Naive thymus-derived CD4-positive, alpha-beta T cell (primary cell): ENCODE measurements at regions of chr9 and their contacts with region 1.

Region 1: DNA sequence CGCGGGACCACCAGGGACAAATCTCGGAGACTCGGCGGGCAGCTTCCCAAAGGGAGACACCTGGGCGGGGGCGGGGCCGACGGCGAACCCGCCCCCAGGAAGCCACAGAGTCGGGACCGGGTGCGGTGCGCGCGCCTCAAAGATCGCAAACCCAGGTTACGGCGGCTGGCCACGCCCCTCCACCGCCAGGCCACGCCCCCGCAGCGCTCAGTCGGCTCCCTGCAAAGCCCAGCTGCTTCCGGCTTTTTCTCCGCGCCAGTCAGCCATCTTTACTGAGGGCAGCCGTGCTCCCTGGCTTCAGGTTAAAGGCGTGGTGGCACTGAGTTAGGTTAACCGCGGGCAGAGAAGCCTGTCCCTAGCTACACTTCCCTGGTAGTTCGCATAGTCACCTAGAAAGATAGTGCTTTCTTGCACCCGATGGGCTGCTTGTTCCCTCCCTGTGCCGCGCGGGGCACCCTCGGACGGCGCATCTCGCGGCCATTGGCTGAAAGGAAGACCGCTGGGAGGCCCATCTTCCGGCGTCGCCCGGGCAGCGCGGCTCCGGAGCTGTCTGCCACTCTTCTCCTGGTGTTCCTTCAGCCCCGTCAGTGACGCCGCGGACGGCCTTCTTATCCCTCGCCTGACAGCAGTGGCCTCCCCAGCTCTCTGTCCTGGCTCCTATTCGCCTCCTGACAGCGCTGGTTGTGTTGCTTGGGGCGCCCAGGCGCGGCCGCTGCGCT is at the start of gene TBC1D2:
- DNase-seq: peak; percentile 96 to 98 (median 98)
- ATAC-seq: peak; percentile 96
- H3K4me3 ChIP-seq: peak within 1 kb of the TSS; percentile 80
- H3K4me3 Mint-ChIP-seq: peak within 1 kb of the TSS; percentile 96 to 99 (median 97)
- H3K27ac ChIP-seq: peak within 1 kb of the TSS; percentile 78
- H3K27ac Mint-ChIP-seq: peak within 1 kb of the TSS; percentile 90 to 99 (median 97)
- H3K4me1 ChIP-seq: peaks cover 11 to 23% of the 10 kb centered on the region in 2 donors
- H3K4me1 Mint-ChIP-seq: peaks cover 24 to 45% (median 32%) of the 10 kb centered on the region in 7 donors
- H3K27me3 ChIP-seq: no peaks in the 10 kb centered on the region
- H3K27me3 Mint-ChIP-seq: peaks cover 0 to 13% (median 0%) of the 10 kb centered on the region in 5 donors
- total RNA-seq, gene TBC1D2: 4.9 to 16.6 (median 8.8) TPM

Region 2: GRCh38 chr9:97696803-97697601 is 558.7 kb before region 1 on chr9 and contains the start of gene XPA:
- CTCF ChIA-PET with region 1: no interaction called
- POLR2A ChIA-PET with region 1: interaction called, 3 read pairs
- intact Hi-C with region 1: loop called (anchors 1 to 5 kb)
- DNase-seq: peak; percentile 95 to 98 (median 96)
- ATAC-seq: peak; percentile 97
- H3K4me3 ChIP-seq: peak within 1 kb of the TSS; percentile 68
- H3K4me3 Mint-ChIP-seq: peak within 1 kb of the TSS; percentile 87 to 96 (median 90)
- H3K27ac ChIP-seq: peak within 1 kb of the TSS; percentile 85
- H3K27ac Mint-ChIP-seq: peak within 1 kb of the TSS; percentile 85 to 98 (median 93)
- H3K4me1 ChIP-seq: peaks cover 32 to 38% of the 10 kb centered on the region in 2 donors
- H3K4me1 Mint-ChIP-seq: peaks cover 53 to 70% (median 65%) of the 10 kb centered on the region in 7 donors
- H3K27me3 ChIP-seq: no peaks in the 10 kb centered on the region
- H3K27me3 Mint-ChIP-seq: peaks cover 0 to 8% (median 0%) of the 10 kb centered on the region in 5 donors
- total RNA-seq, gene XPA: 16.7 to 30.3 (median 23.2) TPM

Region 3: GRCh38 chr9:98045234-98046179 is 210.2 kb before region 1 on chr9:
- CTCF ChIA-PET with region 1: interaction called, 6 read pairs
- POLR2A ChIA-PET with region 1: interaction called, 24 read pairs
- intact Hi-C with region 1: loop called (anchors 1 kb)
- DNase-seq: peak in 8 of 9 donors; percentile 27 to 83 (median 72)
- ATAC-seq: peak; percentile 96
- H3K4me3 ChIP-seq: peak overlapping the region; percentile 59
- H3K4me3 Mint-ChIP-seq: peak overlapping the region; percentile 77 to 95 (median 86)
- H3K27ac ChIP-seq: peak overlapping the region; percentile 49
- H3K27ac Mint-ChIP-seq: peak overlapping the region; percentile 85 to 99 (median 89)
- H3K4me1 ChIP-seq: peaks cover 0 to 8% of the 10 kb centered on the region in 2 donors
- H3K4me1 Mint-ChIP-seq: peaks cover 8 to 51% (median 41%) of the 10 kb centered on the region in 7 donors
- H3K27me3 ChIP-seq: no peaks in the 10 kb centered on the region
- H3K27me3 Mint-ChIP-seq: peaks cover 0 to 5% (median 0%) of the 10 kb centered on the region in 5 donors

Region 4: DNA sequence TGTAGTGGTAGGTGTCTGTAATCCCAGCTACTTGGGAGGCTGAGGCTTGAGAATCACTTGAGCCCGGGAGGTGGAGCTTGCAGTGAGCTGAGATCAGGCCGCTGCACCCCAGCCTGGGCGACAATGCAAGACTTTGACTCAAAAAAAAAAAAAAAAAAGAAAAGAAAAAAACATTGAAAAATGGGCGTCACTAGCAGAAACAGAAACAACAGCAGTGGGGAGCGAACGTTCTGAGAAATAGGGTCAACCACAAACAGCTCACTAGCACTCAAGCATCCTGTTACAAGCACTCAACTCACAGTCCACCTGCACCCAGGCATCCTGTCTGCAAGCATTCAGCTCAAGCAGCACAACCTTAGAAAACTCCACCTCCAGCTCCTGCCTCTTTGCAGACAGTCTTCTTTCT is 153.9 kb before region 1 on chr9:
- CTCF ChIA-PET with region 1: interaction called, 3 read pairs
- POLR2A ChIA-PET with region 1: interaction called, 35 read pairs
- intact Hi-C with region 1: loop called (anchors 1 kb)
- DNase-seq: peak; percentile 35 to 96 (median 92)
- ATAC-seq: peak; percentile 99
- H3K4me3 ChIP-seq: peak overlapping the region; percentile 31
- H3K4me3 Mint-ChIP-seq: peak overlapping the region; percentile 66 to 86 (median 77)
- H3K27ac ChIP-seq: peak overlapping the region; percentile 78
- H3K27ac Mint-ChIP-seq: peak overlapping the region; percentile 87 to 99 (median 95)
- H3K4me1 ChIP-seq: peaks cover 88 to 91% of the 10 kb centered on the region in 2 donors
- H3K4me1 Mint-ChIP-seq: peaks cover 52 to 97% (median 88%) of the 10 kb centered on the region in 7 donors
- H3K27me3 ChIP-seq: no peaks in the 10 kb centered on the region
- H3K27me3 Mint-ChIP-seq: no peaks in the 10 kb centered on the region

Region 5: DNA sequence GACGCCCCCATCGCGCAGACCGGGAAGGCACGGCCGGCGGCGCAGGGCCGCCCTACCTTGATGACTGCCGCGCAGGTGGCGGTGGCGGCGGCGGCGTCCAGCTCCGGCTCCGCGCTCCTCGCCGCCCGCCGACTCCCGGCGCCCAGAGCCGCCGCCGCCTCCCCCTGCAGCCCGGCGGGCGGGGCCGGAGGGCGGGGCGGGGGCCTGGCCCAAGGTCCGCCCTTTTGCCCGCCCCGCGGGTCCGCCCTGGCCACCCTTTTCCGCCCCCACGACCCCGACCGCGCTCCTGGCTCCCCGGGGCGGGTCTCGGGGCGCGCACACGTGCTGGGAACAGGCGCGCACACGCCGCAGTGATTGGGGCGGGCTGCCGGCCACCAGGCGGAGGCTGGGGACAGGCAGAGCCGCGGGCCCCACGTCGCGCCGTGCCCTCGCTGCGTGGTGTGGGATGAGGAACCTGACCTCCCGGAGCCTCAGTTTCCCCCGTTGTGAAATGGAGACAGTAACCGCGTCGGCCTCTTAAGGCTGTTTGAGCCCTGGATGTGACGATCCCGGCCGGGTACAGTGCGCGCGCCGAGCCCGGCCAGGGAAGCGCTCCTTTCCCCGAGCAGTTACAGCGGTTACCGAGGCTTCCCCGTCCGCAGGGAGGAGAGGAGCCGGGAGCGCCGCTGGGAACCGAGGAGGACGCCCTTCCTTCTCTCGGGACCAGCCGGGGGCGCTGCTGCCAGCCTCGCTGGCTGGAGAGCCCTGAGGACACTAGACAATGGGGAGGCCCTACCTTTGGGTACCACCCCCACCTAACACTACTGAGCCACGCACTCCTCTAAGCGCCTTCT is 63.0 kb before region 1 on chr9 and contains the start of gene CORO2A:
- CTCF ChIA-PET with region 1: interaction called, 3 read pairs
- POLR2A ChIA-PET with region 1: interaction called, 18 read pairs
- intact Hi-C with region 1: loop called (anchors 1 kb)
- DNase-seq: peak; percentile 37 to 85 (median 47)
- ATAC-seq: peak; percentile 86
- H3K4me3 ChIP-seq: peak within 1 kb of the TSS; percentile 81
- H3K4me3 Mint-ChIP-seq: peak within 1 kb of the TSS; percentile 76 to 92 (median 86)
- H3K27ac ChIP-seq: peak within 1 kb of the TSS; percentile 53
- H3K27ac Mint-ChIP-seq: peak within 1 kb of the TSS; percentile 19 to 90 (median 83)
- H3K4me1 ChIP-seq: peaks cover 17 to 22% of the 10 kb centered on the region in 2 donors
- H3K4me1 Mint-ChIP-seq: peaks cover 12 to 46% (median 41%) of the 10 kb centered on the region in 7 donors
- H3K27me3 ChIP-seq: no peaks in the 10 kb centered on the region
- H3K27me3 Mint-ChIP-seq: peaks cover 0 to 17% (median 0%) of the 10 kb centered on the region in 5 donors
- total RNA-seq, gene CORO2A: 3.0 to 9.7 (median 7.7) TPM

Region 6: GRCh38 chr9:99104459-99105151 is 848.9 kb after region 1 on chr9 and contains the start of gene TGFBR1:
- CTCF ChIA-PET with region 1: no interaction called
- POLR2A ChIA-PET with region 1: interaction called, 4 read pairs
- intact Hi-C with region 1: loop called in 1 of 2 experiments (anchors 5 kb)
- DNase-seq: peak; percentile 87 to 98 (median 89)
- ATAC-seq: peak; percentile 91
- H3K4me3 ChIP-seq: peak within 1 kb of the TSS; percentile 73
- H3K4me3 Mint-ChIP-seq: peak within 1 kb of the TSS; percentile 90 to 97 (median 94)
- H3K27ac ChIP-seq: peak within 1 kb of the TSS; percentile 74
- H3K27ac Mint-ChIP-seq: peak within 1 kb of the TSS; percentile 78 to 99 (median 95)
- H3K4me1 ChIP-seq: peaks cover 43 to 49% of the 10 kb centered on the region in 2 donors
- H3K4me1 Mint-ChIP-seq: peaks cover 36 to 65% (median 59%) of the 10 kb centered on the region in 7 donors
- H3K27me3 ChIP-seq: no peaks in the 10 kb centered on the region
- H3K27me3 Mint-ChIP-seq: no peaks in the 10 kb centered on the region
- total RNA-seq, gene TGFBR1: 20.6 to 95.5 (median 29.5) TPM